ENCODE measurements at regions of chr15 and their contacts with region 1.

Region 1: GRCh38 chr15:33242669-33243191 is 48.2 kb upstream of the FMN1 start:
- DNase-seq: peak in 2 of 3 donors; percentile 44 to 52
- H3K4me3 ChIP-seq: no peak overlapping the region
- H3K27ac ChIP-seq: no peak overlapping the region
- H3K4me1 ChIP-seq: peaks cover 0 to 3% (median 0%) of the 10 kb centered on the region in 4 experiments
- H3K27me3 ChIP-seq: peaks cover 0 to 2% (median 0%) of the 10 kb centered on the region in 5 experiments

Region 2: GRCh38 chr15:33226559-33227181 is 16.1 kb before region 1 on chr15:
- CTCF ChIA-PET with region 1: interaction called, 13 read pairs
- POLR2A ChIA-PET with region 1: no interaction called
- DNase-seq: peak; percentile 92 to 96 (median 94)
- H3K4me3 ChIP-seq: no peak overlapping the region
- H3K27ac ChIP-seq: no peak overlapping the region
- H3K4me1 ChIP-seq: peaks cover 0 to 12% (median 7%) of the 10 kb centered on the region in 4 experiments
- H3K27me3 ChIP-seq: no peaks in the 10 kb centered on the region

Measured in common myeloid progenitor, CD34-positive (primary cell).